ENCODE measurements at regions of chr1 and their contacts with region 1.

Region 1: DNA sequence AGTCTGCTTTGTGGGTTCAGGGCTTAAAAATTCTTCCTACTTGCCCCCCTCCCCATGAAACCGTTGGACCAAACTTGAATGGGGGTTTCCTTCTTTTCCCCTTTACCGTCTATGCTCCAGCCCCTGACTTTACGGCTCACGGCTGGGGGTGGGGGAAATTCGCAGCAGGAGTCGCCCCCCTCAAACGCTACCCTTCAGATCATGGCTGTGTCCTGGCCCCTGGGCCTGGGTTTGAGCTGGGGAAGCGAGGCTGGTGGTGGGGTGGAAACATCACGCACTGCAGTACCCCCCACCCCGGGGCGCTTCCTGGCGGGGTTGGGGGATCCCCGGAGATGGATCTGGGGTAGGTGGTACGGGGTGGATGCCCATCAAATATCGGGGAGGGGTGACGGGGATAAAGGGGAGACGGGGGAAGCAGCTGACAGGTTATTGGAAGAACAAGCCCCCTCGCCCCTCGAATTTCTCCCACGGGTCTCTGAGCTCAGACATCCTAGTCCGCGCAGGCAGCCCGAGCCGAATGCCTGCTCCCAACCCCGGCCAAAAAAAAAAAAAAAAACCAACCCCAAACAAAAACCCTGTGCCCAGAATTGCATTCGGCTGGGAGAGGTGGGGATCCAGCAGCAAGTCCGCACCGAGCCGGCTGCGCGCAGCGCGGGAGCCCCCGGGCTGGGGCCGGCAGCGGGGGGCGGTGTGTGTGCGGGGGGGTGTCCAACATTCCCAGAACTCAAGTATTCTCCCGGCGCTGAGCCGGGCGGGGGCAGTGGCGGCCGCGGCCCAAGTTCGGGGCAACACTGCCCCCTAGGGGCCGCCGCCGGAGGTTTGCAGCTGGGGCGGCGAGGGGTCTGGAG is 59.0 kb upstream of the ACOT11 start:
- DNase-seq: peak; percentile 84
- ATAC-seq: peak; percentile 65
- H3K4me3 ChIP-seq: peak overlapping the region; percentile 87
- H3K27ac ChIP-seq: peak overlapping the region; percentile 45
- H3K4me1 ChIP-seq: peaks cover 15% of the 10 kb centered on the region
- H3K27me3 ChIP-seq: no peaks in the 10 kb centered on the region
- CTCF ChIP-seq: peak; percentile 91

Region 2: GRCh38 chr1:54108156-54108555 is 380.8 kb before region 1 on chr1:
- CTCF ChIA-PET with region 1: interaction called, 10 read pairs
- POLR2A ChIA-PET with region 1: no interaction called
- intact Hi-C with region 1: no loop called
- DNase-seq: no peak
- ATAC-seq: no peak
- H3K4me3 ChIP-seq: no peak overlapping the region
- H3K27ac ChIP-seq: no peak overlapping the region
- H3K4me1 ChIP-seq: no peaks in the 10 kb centered on the region
- H3K27me3 ChIP-seq: no peaks in the 10 kb centered on the region
- CTCF ChIP-seq: no peak

Region 3: GRCh38 chr1:54180701-54181360 is 308.2 kb before region 1 on chr1:
- CTCF ChIA-PET with region 1: interaction called, 28 read pairs
- POLR2A ChIA-PET with region 1: no interaction called
- intact Hi-C with region 1: no loop called
- DNase-seq: no peak
- ATAC-seq: no peak
- H3K4me3 ChIP-seq: no peak overlapping the region
- H3K27ac ChIP-seq: no peak overlapping the region
- H3K4me1 ChIP-seq: no peaks in the 10 kb centered on the region
- H3K27me3 ChIP-seq: no peaks in the 10 kb centered on the region
- CTCF ChIP-seq: no peak

Region 4: DNA sequence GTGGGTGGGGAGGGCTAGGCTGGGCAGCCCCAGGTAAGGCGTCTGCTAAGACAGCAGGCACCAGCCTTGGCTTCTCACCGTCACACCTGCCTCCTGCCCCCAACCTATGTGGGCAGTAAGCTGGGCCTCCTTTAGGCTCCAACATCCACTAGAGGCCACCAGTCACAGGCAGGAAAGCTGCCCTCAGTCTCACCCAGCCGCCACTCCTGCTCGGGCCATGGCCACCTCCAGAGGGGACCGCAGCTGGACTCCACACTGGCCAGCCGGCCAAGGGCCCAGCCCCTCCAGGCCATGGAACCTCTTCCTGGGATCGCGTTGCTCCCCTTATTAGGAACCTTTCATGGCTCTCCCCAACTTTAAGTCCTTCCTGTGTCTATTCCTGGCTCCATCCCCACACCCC is 214.6 kb before region 1 on chr1:
- CTCF ChIA-PET with region 1: interaction called, 16 read pairs
- POLR2A ChIA-PET with region 1: no interaction called
- intact Hi-C with region 1: no loop called
- DNase-seq: no peak
- ATAC-seq: no peak
- H3K4me3 ChIP-seq: no peak overlapping the region
- H3K27ac ChIP-seq: no peak overlapping the region
- H3K4me1 ChIP-seq: no peaks in the 10 kb centered on the region
- H3K27me3 ChIP-seq: no peaks in the 10 kb centered on the region
- CTCF ChIP-seq: no peak

Region 5: GRCh38 chr1:54360165-54361005 is 128.6 kb before region 1 on chr1:
- CTCF ChIA-PET with region 1: no interaction called
- POLR2A ChIA-PET with region 1: no interaction called
- intact Hi-C with region 1: loop called (anchors 1 kb)
- DNase-seq: peak; percentile 9
- ATAC-seq: no peak
- H3K4me3 ChIP-seq: no peak overlapping the region
- H3K27ac ChIP-seq: no peak overlapping the region
- H3K4me1 ChIP-seq: no peaks in the 10 kb centered on the region
- H3K27me3 ChIP-seq: no peaks in the 10 kb centered on the region
- CTCF ChIP-seq: peak; percentile 17; the same call in 1 of the 2 replicates

Region 6: DNA sequence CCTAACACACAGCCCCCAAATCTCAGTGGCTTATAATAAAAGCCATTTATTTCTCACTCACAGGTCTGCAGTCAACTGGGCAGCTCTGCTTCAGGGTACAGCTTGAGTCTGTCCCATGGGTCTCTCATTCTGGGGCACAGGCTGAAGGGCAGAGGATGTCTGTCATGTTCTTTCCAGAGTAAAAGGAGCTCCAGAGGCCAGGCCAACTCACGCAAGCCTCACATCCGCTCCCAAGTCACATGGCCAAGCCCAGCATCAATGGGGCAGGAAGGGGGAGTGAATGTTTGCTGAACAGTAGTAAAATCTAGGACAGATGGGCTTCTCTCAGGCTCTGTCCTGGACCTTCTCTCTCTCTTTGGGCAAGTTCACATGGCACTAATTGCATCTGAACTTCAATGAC is 75.7 kb before region 1 on chr1:
- CTCF ChIA-PET with region 1: no interaction called
- POLR2A ChIA-PET with region 1: no interaction called
- intact Hi-C with region 1: no loop called
- DNase-seq: peak; percentile 60
- ATAC-seq: peak; percentile 65
- H3K4me3 ChIP-seq: no peak overlapping the region
- H3K27ac ChIP-seq: 0 out of 2 replicates have a peak overlapping the region, but pooled peaks have one; percentile 15
- H3K4me1 ChIP-seq: peaks cover 19% of the 10 kb centered on the region
- H3K27me3 ChIP-seq: no peaks in the 10 kb centered on the region
- CTCF ChIP-seq: no peak

Region 7: GRCh38 chr1:54442185-54442584 is 46.8 kb before region 1 on chr1:
- CTCF ChIA-PET with region 1: no interaction called
- POLR2A ChIA-PET with region 1: no interaction called
- intact Hi-C with region 1: no loop called
- DNase-seq: no peak
- ATAC-seq: no peak
- H3K4me3 ChIP-seq: no peak overlapping the region
- H3K27ac ChIP-seq: no peak overlapping the region
- H3K4me1 ChIP-seq: no peaks in the 10 kb centered on the region
- H3K27me3 ChIP-seq: no peaks in the 10 kb centered on the region
- CTCF ChIP-seq: no peak

Region 8: DNA sequence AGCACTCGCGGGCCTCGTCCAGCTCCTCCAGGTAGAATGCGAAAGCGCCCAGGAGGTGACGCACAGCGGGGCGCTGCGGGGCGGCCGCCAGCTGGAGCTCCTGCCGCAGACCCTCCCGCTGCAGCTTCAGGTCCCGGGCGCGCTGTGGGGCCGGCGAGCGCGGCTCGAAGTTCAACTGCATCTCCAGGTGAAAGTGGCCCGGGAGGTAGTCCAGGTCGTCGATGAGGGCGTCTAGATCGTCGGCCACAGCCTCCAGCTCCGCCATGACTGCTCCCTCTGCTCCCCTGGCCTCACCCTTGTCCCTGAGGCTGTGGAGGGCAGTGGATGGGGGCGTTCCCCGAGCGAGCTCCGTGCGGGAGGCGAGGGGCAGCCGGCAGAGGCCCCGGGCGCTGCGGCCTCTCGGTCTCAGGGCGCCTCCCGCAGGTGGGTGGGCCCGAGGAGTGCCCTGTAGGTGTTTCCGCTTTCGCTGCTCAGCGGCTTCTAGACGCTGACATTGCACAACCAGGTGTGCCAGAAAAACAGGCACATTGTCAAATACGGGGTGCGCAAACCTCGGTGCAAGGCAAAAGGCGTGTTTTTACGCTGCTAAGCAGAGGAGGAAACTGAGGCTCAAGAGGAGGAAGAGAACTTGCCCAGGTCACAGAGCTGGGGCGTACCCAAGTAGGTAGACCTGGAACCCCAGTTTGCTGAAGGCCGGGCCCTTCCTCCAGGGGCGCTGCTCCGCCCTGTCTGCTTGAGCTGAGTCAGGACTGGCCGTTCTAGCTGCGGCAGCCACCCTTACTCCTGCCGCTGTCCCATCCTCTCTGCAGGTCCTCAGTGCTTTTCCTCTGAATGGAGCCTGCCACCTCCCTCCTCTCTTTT is 312.1 kb after region 1 on chr1 and contains the start of gene TTC22:
- CTCF ChIA-PET with region 1: interaction called, 13 read pairs
- POLR2A ChIA-PET with region 1: no interaction called
- intact Hi-C with region 1: no loop called
- DNase-seq: peak; percentile 73
- ATAC-seq: peak; percentile 79
- H3K4me3 ChIP-seq: peak within 1 kb of the TSS; percentile 74
- H3K27ac ChIP-seq: peak within 1 kb of the TSS; percentile 51
- H3K4me1 ChIP-seq: peaks cover 60% of the 10 kb centered on the region
- H3K27me3 ChIP-seq: no peaks in the 10 kb centered on the region
- CTCF ChIP-seq: peak; percentile 75
- total RNA-seq, gene TTC22: 21.8 and 31.3 TPM in 2 replicates

Region 9: GRCh38 chr1:55021965-55022546 is 533.1 kb after region 1 on chr1:
- CTCF ChIA-PET with region 1: interaction called, 15 read pairs
- POLR2A ChIA-PET with region 1: no interaction called
- intact Hi-C with region 1: no loop called
- DNase-seq: peak; percentile 96
- ATAC-seq: peak; percentile 100
- H3K4me3 ChIP-seq: no peak overlapping the region
- H3K27ac ChIP-seq: no peak overlapping the region
- H3K4me1 ChIP-seq: peaks cover 11% of the 10 kb centered on the region
- H3K27me3 ChIP-seq: no peaks in the 10 kb centered on the region
- CTCF ChIP-seq: peak; percentile 94